Left cardiac atrium (tissue), 4 donors: ENCODE measurements at regions of chr10 and their contacts with region 1.

Region 1: DNA sequence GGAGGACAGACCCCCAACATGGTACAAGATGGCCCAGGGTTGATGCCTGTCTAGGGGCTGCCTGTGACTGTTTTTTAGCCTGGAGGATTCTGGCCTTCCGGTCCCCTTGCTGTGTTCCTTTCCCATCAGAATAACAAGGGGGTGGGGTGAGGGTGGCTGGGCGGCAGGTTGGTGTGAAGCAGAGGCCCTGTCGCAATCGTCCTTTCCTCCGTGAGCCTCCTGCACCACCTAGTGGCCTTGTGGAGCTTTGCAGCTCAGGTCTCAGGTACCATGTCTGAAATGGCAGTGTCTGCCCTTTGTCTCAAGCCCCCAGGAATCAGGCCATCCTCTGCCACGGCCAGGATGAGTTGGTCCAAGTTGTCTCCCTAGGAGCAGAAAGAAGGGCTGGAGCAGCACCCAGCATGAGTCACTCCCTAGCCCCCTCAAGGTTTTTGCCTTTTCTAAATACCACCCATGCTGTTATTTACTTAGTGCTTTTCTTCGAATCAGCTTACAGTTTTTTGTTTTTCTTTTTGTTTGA is 24.2 kb downstream of the TACR2 start:
- DNase-seq: peak; percentile 89
- ATAC-seq: peak; percentile 88

Region 2: DNA sequence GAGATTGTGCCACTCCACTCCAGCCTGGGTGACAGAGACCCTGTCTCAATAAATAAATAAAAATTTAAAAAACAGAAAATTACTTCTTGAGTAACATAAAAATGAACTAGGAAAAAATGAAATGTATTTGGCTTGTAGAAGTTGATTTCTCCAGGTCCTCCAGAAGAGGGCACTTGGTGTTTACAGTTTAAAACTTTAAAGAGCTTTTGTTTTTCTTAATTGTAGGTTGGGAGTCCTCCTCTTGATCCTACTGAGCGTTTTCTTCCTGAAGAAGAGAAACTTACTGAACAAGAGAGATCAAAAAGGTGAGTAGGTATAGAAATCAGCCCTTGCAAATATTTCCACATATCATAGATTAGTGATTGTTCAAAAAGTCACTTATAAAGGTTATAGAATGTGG is 387.7 kb before region 1 on chr10:
- intact Hi-C with region 1: loop called in 1 of 2 experiments (anchors 10 kb)
- DNase-seq: no peak
- ATAC-seq: no peak

Region 3: GRCh38 chr10:69237528-69238159 is 154.9 kb before region 1 on chr10:
- intact Hi-C with region 1: loop called (anchors 1 to 2 kb)
- DNase-seq: peak; percentile 88
- ATAC-seq: peak; percentile 96 to 98

Region 4: DNA sequence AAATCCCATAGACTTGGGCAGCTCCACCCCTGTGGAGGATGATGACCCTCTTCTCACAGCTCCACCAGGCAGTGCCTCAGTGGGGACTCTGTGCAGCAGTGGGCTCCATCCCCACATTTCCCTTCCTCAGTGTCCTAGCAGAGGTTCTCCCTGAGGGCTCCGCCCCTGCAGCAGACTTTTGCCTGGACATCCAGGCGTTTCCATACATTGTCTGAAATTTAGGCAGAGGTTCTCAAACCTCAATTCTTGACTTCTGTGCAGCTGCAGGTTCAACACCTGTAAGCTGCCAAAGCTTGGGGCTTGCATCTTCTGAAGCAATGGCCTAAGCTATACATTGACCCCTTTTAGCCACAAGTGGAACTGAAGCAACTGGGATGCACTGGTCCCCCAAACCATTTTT is 148.9 kb after region 1 on chr10:
- intact Hi-C with region 1: no loop called
- DNase-seq: no peak
- ATAC-seq: no peak

Region 5: DNA sequence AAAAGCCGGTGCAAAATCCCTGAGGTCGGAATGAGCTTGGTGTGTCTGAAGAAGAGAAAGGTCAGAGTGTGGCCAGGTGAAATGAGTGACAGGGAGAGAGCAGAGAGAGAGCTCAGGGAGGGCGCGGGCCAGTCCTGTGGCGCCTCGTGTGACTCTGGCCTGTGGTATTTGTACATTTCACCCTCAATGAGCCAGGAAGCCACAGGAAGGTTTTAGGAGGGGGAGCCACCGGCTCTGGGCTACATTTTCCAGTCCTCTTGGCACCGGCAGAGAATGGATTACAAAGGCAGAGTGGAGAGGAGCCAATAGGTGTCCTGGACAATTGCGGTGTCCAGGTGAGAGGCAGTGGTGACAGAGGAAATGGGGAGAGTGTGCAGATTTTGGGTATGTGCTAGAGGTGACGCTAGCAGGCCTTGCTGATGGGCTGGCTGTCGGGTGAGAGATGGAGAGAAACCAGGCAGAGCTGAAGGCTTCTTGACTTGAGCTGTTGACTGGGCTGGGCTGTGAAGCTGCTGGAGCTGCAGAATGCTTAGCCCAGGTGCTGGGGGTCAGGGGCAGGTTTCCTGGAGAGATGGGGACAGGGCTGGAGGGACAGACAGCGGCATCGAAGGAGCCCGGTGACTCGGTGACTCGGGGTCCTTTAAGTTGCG is 447.3 kb after region 1 on chr10:
- intact Hi-C with region 1: no loop called
- DNase-seq: no peak
- ATAC-seq: peak; percentile 24 to 55